SK-N-SH (cell line): ENCODE measurements at regions of chr12 and their contacts with region 1.

Region 1: GRCh38 chr12:121668750-121669520 is 519 bp downstream of the MORN3 start:
- DNase-seq: peak; percentile 84
- H3K4me3 ChIP-seq: no peak overlapping the region
- H3K27ac ChIP-seq: no peak overlapping the region
- H3K4me1 ChIP-seq: peaks cover 0 to 6% of the 10 kb centered on the region in 2 experiments; a peak in 1 of 4 replicates
- H3K27me3 ChIP-seq: no peaks in the 10 kb centered on the region
- CTCF ChIP-seq: peak; percentile 79
- EP300 ChIP-seq: no peak
- RAD21 ChIP-seq: peak; percentile 72

Region 2: GRCh38 chr12:121494093-121494787 is 174.7 kb before region 1 on chr12:
- CTCF ChIA-PET with region 1: interaction called, 24 read pairs
- POLR2A ChIA-PET with region 1: no interaction called
- DNase-seq: peak; percentile 73
- H3K4me3 ChIP-seq: no peak overlapping the region
- H3K27ac ChIP-seq: no peak overlapping the region
- H3K4me1 ChIP-seq: no peaks in the 10 kb centered on the region
- H3K27me3 ChIP-seq: no peaks in the 10 kb centered on the region
- CTCF ChIP-seq: peak; percentile 86
- EP300 ChIP-seq: no peak
- RAD21 ChIP-seq: peak; percentile 51

Region 3: GRCh38 chr12:121626087-121626852 is 42.7 kb before region 1 on chr12 and contains the start of gene ORAI1:
- CTCF ChIA-PET with region 1: interaction called, 17 read pairs
- POLR2A ChIA-PET with region 1: interaction called, 4 read pairs
- DNase-seq: peak; percentile 99
- H3K4me3 ChIP-seq: peak within 1 kb of the TSS; percentile 63 to 82
- H3K27ac ChIP-seq: peak within 1 kb of the TSS; percentile 77 to 84
- H3K4me1 ChIP-seq: peaks cover 16 to 23% of the 10 kb centered on the region in 2 experiments; a peak in 3 of 4 replicates
- H3K27me3 ChIP-seq: no peaks in the 10 kb centered on the region
- CTCF ChIP-seq: no peak; the same call in 1 of the 2 replicates
- EP300 ChIP-seq: no peak
- RAD21 ChIP-seq: no peak
- polyA plus RNA-seq, gene ORAI1: 13.2 and 16.6 TPM in 2 replicates

Region 4: GRCh38 chr12:121649819-121650353 is 19.0 kb before region 1 on chr12:
- CTCF ChIA-PET with region 1: interaction called, 13 read pairs
- POLR2A ChIA-PET with region 1: no interaction called
- DNase-seq: no peak
- H3K4me3 ChIP-seq: no peak overlapping the region
- H3K27ac ChIP-seq: no peak overlapping the region
- H3K4me1 ChIP-seq: no peaks in the 10 kb centered on the region
- H3K27me3 ChIP-seq: no peaks in the 10 kb centered on the region
- CTCF ChIP-seq: no peak
- EP300 ChIP-seq: no peak
- RAD21 ChIP-seq: no peak

Region 5: GRCh38 chr12:121678716-121679580 is 10.0 kb after region 1 on chr12:
- CTCF ChIA-PET with region 1: interaction called, 13 read pairs
- POLR2A ChIA-PET with region 1: no interaction called
- DNase-seq: no peak
- H3K4me3 ChIP-seq: no peak overlapping the region
- H3K27ac ChIP-seq: no peak overlapping the region
- H3K4me1 ChIP-seq: peaks cover 0 to 5% of the 10 kb centered on the region in 2 experiments; a peak in 1 of 4 replicates
- H3K27me3 ChIP-seq: no peaks in the 10 kb centered on the region
- CTCF ChIP-seq: no peak
- EP300 ChIP-seq: no peak
- RAD21 ChIP-seq: no peak